PC-3 (cell line): ENCODE measurements at regions of chr3 and their contacts with region 1.

Region 1: DNA sequence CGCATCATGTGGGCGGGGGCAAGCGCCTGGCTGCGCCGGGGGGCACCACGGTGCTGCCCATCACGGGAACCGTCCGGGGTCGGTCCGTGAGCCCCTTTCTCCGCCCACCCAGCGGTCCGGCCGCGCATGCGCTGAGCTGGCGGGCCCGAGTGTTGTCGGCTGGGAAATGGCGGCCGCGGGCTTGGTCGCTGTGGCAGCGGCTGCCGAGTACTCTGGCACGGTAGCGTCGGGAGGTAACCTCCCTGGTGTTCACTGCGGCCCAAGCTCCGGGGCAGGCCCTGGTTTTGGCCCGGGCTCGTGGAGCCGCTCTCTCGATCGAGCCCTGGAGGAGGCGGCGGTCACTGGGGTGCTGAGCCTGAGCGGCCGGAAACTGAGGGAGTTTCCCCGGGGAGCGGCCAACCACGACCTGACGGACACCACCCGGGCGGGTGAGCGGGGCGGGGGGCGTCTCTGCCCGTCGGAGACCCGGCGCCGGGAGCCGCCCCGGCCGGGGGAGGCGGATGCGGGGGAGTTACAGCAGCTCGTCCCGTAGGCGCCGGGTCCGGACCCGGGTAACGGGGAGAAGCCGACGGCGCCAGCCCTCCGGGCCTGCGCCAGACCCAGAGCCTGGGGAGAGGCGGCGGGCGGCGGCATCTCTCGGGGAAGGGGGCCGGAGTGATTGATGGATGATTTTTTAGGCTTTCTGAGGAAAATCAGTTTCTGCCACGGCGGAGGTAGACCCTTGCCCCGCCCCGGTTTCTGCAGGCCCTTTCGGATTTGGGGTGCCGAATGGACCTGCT is at the start of gene LRCH3:
- DNase-seq: peak; percentile 68
- ATAC-seq: peak; percentile 74
- H3K4me3 ChIP-seq: peak within 1 kb of the TSS; percentile 81
- H3K27ac ChIP-seq: peak within 1 kb of the TSS; percentile 75
- H3K4me1 ChIP-seq: peaks cover 26% of the 10 kb centered on the region
- H3K27me3 ChIP-seq: no peaks in the 10 kb centered on the region
- CTCF ChIP-seq: no peak
- total RNA-seq, gene LRCH3: 43.1 and 146 TPM in 2 replicates

Region 2: DNA sequence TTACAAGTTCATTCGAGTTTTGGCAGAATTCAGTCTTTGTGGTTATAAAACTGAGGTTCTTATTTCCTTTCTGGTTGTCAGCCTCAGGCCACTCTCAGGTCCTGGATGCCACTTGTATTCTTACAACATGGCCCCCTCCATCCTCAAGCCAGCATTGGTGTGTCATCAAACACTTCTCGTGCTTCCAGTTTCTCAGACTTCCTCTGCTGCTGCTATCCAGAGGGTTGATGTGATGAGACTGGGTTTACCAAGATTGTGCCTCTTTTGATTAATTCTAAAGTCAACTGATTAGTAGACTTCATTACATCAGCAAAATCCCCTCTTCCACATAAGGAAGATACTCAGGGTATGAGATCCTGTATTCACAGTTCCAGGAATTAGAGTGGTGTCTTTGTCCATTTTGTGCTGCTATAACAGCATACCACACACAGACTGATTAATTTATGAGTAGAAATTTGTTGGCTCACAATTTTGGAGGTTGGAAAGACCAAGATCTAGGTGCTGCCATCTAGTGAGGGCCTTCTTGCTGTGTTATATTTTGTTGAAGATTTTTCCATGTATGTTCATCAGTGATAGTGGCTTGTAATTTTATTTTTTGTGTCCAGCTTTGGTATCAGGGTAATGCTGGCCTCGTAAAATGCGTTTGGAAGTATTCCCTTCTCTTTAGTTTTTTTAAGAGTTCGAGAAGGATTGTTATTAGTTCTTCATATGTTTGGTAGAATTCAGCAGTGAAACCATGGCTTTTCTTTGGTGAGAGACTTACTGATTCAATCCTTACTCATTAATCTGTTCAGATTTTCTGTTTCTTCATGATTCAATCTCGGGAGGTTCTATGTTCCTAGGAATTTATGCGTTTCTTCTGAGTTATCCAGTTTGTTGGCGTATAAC is 10.8 kb after region 1 on chr3:
- CTCF ChIA-PET with region 1: no interaction called
- POLR2A ChIA-PET with region 1: no interaction called
- intact Hi-C with region 1: loop called (anchors 1 kb)
- DNase-seq: peak; percentile 59
- ATAC-seq: peak; percentile 61
- H3K4me3 ChIP-seq: no peak overlapping the region
- H3K27ac ChIP-seq: peak overlapping the region; percentile 52
- H3K4me1 ChIP-seq: peaks cover 21% of the 10 kb centered on the region
- H3K27me3 ChIP-seq: no peaks in the 10 kb centered on the region
- CTCF ChIP-seq: peak; percentile 65

Region 3: DNA sequence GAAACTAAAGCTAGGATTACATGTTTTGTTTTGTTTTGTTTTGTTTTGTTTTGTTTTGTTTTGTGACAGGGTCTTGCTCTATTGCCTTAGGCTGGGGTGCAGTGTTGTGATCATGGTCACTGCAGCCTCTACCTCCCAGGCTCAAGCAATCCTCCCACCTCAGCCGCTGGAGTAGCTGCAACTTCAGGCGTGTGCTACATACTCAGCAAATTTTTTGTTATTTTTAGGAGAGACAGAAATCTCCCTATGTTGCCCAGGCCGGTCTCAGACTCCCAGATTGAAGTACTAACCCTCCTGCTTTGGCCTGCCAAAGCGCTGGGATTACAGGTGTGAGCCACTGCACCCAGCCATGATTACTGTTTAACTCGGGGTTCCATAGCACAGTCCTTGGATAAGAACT is 50.5 kb after region 1 on chr3:
- CTCF ChIA-PET with region 1: no interaction called
- POLR2A ChIA-PET with region 1: no interaction called
- intact Hi-C with region 1: no loop called
- DNase-seq: no peak
- ATAC-seq: no peak
- H3K4me3 ChIP-seq: no peak overlapping the region
- H3K27ac ChIP-seq: no peak overlapping the region
- H3K4me1 ChIP-seq: no peaks in the 10 kb centered on the region
- H3K27me3 ChIP-seq: no peaks in the 10 kb centered on the region
- CTCF ChIP-seq: no peak

Region 4: DNA sequence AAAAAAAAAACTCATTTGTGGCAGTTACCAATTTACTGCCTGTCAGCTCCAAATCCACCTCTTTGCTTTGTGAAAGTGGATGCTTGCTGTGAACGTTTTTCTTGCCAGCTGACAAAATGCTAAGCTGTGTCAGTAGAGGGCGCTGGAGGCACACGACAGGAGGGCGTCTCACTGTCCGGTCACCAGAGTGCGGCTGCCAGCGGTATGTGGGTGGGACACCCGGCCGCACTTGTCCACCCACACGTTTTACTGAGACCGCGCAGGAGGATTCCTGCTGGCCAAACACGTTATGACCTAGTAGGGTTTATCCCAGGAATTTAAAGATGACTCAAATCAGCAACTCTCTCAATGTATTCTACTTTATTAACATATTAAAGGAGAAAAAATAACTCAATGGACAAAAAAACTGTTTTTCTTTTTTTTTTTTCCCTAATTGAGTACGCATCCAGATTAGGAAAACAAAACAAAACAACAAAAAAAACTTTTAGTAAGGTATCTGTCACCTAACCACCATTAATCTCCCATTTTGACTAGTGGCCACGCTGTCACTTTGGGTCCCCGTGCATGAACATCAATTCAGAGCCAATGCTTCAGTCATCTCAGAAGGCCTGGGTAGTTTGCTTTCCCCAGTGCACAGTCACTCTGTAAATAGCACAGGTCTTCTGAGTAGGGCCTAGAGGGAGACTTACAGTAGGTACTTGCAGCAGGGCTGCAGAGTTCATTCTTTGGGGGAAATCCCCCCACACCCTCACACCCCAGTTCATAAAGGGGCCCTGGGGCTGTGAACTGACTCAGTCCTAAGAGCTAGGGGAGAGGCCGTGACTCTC is 114.9 kb after region 1 on chr3:
- CTCF ChIA-PET with region 1: no interaction called
- POLR2A ChIA-PET with region 1: no interaction called
- intact Hi-C with region 1: no loop called
- DNase-seq: peak; percentile 95
- ATAC-seq: peak; percentile 99
- H3K4me3 ChIP-seq: no peak overlapping the region
- H3K27ac ChIP-seq: peak overlapping the region; percentile 38
- H3K4me1 ChIP-seq: peaks cover 12% of the 10 kb centered on the region
- H3K27me3 ChIP-seq: no peaks in the 10 kb centered on the region
- CTCF ChIP-seq: peak; percentile 97